ENCODE measurements at regions of chr1 and their contacts with region 1.

Region 1: GRCh38 chr1:31617917-31618660 is 600 bp downstream of the HCRTR1 start:
- DNase-seq: peak; percentile 59
- H3K4me3 ChIP-seq: peak overlapping the region; percentile 39 to 58 (median 54)
- H3K27ac ChIP-seq: no peak overlapping the region
- H3K4me1 ChIP-seq: no peaks in the 10 kb centered on the region
- H3K27me3 ChIP-seq: peaks cover 0 to 1% of the 10 kb centered on the region in 2 experiments
- CTCF ChIP-seq: peak; percentile 73 to 97
- POLR2A ChIP-seq: no peak

Region 2: GRCh38 chr1:31182352-31182751 is 435.7 kb before region 1 on chr1:
- CTCF ChIA-PET with region 1: no interaction called
- POLR2A ChIA-PET with region 1: no interaction called
- dilution Hi-C with region 1: no loop called
- intact Hi-C with region 1: loop called (anchors 1 kb)
- DNase-seq: peak; percentile 68
- H3K4me3 ChIP-seq: no peak overlapping the region
- H3K27ac ChIP-seq: no peak overlapping the region
- H3K4me1 ChIP-seq: no peaks in the 10 kb centered on the region
- H3K27me3 ChIP-seq: peaks cover 3 to 4% of the 10 kb centered on the region in 2 experiments
- CTCF ChIP-seq: peak; percentile 7 to 25
- POLR2A ChIP-seq: no peak

Region 3: DNA sequence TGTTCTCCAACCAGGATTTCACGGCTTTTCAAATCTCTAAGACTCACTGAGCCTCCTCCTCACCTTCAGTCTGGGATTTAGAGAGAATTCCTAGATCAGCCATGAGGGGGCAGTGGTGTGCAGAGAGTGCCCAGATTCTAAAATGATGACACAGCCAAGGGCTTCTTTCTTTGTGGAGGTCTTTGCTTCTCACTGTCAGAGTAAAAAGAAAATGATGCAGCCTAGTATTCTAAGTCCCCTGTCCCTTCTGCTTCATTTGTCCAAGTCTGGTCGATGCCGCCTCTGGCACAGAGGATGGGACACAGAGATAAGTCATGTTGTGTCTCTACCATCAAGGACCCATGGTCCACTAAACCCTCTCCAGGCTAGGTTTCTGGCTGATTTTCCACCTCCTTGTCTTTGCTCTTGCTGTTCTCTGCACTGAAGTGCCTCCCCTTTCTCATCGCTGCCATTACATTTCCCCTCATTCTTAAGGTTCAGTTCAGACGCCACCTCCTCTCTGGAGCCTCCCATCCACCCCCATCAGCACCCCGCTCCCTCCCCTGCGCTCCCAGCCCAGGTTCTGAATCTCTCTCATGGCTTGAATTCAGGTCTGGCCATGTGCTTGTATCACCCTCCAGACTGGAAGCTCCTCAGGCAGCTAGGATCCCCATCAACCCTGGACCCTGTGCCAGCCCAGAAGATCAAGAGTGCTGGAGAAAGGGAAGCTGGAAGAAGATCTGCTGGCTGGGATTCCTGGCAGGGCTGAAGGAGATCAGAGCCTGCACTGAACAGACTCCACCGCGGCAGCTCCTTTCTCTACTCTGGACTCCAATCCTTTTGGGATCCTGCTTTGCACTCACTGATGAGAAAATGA is 53.7 kb before region 1 on chr1:
- CTCF ChIA-PET with region 1: interaction called, 73 read pairs
- POLR2A ChIA-PET with region 1: no interaction called
- dilution Hi-C with region 1: no loop called
- intact Hi-C with region 1: loop called (anchors 1 kb)
- DNase-seq: peak; percentile 83
- H3K4me3 ChIP-seq: no peak overlapping the region
- H3K27ac ChIP-seq: no peak overlapping the region
- H3K4me1 ChIP-seq: peaks cover 19% of the 10 kb centered on the region
- H3K27me3 ChIP-seq: no peaks in the 10 kb centered on the region
- CTCF ChIP-seq: peak; percentile 74 to 76
- POLR2A ChIP-seq: no peak

Region 4: GRCh38 chr1:31587720-31588394 is 30.2 kb before region 1 on chr1:
- CTCF ChIA-PET with region 1: interaction called, 33 read pairs
- POLR2A ChIA-PET with region 1: no interaction called
- dilution Hi-C with region 1: no loop called
- intact Hi-C with region 1: loop called (anchors 1 kb)
- DNase-seq: peak; percentile 86
- H3K4me3 ChIP-seq: no peak overlapping the region
- H3K27ac ChIP-seq: peak overlapping the region; percentile 92
- H3K4me1 ChIP-seq: peaks cover 39% of the 10 kb centered on the region
- H3K27me3 ChIP-seq: no peaks in the 10 kb centered on the region
- CTCF ChIP-seq: peak; percentile 71 to 92
- POLR2A ChIP-seq: peak; percentile 81

Region 5: DNA sequence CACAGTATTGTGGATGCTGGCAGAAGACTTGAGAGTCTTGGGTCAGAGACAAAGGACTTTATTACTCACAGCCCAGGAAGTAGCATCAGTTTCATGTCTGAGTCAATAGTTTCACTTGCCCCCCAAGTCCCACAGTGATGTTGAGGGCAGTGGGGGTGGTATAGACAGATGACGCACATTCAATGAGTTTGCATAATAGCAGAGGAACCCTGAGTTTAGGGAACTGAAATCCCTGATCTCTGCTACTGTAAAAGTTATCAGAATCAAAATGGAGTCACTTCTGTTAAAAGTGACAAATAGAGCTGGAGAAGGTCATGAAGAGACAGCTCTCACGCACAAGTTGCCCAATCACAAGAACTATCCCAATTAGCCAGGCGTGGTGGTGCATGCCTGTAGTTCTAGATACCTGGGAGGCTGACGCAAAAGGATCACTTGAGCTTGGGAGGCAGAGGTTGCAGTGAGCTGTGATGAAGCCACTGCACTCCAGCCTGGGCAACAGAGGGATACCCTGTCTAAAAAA is 12.1 kb before region 1 on chr1:
- CTCF ChIA-PET with region 1: interaction called, 15 read pairs
- POLR2A ChIA-PET with region 1: no interaction called
- dilution Hi-C with region 1: no loop called
- intact Hi-C with region 1: no loop called
- DNase-seq: no peak
- H3K4me3 ChIP-seq: no peak overlapping the region
- H3K27ac ChIP-seq: no peak overlapping the region
- H3K4me1 ChIP-seq: no peaks in the 10 kb centered on the region
- H3K27me3 ChIP-seq: peaks cover 0 to 2% of the 10 kb centered on the region in 2 experiments
- CTCF ChIP-seq: no peak
- POLR2A ChIP-seq: no peak

Region 6: GRCh38 chr1:31705080-31705866 is 87.2 kb after region 1 on chr1:
- CTCF ChIA-PET with region 1: no interaction called
- POLR2A ChIA-PET with region 1: no interaction called
- dilution Hi-C with region 1: no loop called
- intact Hi-C with region 1: no loop called
- DNase-seq: no peak
- H3K4me3 ChIP-seq: no peak overlapping the region
- H3K27ac ChIP-seq: no peak overlapping the region
- H3K4me1 ChIP-seq: peaks cover 9% of the 10 kb centered on the region
- H3K27me3 ChIP-seq: peaks cover 0 to 3% of the 10 kb centered on the region in 2 experiments
- CTCF ChIP-seq: peak; percentile 5 to 12
- POLR2A ChIP-seq: no peak

Measured in endothelial cell of umbilical vein (primary cell).